Right cardiac atrium (tissue), 5 donors: ENCODE measurements at regions of chr6 and their contacts with region 1.

Region 1: GRCh38 chr6:32933636-32934085 is 7.2 kb downstream of the HLA-DMB start:
- DNase-seq: peak; percentile 79 to 92 (median 87)
- ATAC-seq: peak; percentile 62 to 79
- H3K4me3 ChIP-seq: no peak overlapping the region
- H3K27ac ChIP-seq: no peak overlapping the region
- H3K4me1 ChIP-seq: no peaks in the 10 kb centered on the region
- H3K27me3 ChIP-seq: no peaks in the 10 kb centered on the region

Region 2: DNA sequence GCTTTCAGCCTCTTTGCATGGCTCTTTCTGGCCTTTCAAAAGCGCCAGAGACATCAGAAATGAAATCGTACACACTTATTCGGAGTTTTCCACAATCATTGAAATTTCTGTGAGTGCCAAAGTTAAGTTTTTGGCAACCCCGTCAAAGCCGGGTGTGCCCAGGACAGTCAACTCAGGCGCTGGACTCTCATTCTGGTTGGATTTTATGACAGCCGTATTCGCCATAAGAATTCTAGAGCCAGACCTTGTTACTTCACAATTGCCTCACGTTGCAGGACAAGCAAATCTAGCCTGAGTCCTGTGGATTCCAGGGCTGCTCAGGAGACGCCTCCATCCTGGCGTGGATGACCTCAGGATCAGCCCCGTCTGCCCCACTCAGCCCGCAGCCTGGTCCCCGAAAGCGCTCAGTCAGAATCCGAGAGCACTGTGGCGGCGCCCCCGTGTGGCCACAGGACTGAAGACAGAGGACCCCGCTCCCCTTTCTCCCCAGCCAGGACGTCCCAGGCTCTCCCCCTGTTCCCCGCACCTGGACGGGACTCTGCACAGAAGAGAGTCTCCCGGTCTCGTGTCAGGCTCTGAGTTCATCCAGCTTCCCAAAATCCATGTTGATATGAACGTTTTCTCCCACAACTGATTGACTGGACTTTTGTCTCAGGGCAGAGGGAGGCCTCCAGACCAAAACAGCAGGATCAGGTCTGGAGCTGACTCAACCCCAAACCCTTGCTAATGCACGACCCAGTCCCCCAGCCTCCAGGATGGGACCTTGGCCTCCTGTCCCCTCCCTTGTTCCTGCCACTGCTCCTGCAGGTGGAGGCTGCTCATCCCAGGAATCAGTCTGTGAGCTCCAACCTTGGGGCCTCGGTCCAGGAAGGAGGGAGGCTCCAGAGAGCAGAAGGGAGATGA is 1492.0 kb before region 1 on chr6:
- intact Hi-C with region 1: no loop called
- DNase-seq: peak; percentile 83 to 95 (median 93)
- ATAC-seq: peak; percentile 96 to 98
- H3K4me3 ChIP-seq: no peak overlapping the region
- H3K27ac ChIP-seq: no peak overlapping the region
- H3K4me1 ChIP-seq: no peaks in the 10 kb centered on the region
- H3K27me3 ChIP-seq: no peaks in the 10 kb centered on the region

Region 3: DNA sequence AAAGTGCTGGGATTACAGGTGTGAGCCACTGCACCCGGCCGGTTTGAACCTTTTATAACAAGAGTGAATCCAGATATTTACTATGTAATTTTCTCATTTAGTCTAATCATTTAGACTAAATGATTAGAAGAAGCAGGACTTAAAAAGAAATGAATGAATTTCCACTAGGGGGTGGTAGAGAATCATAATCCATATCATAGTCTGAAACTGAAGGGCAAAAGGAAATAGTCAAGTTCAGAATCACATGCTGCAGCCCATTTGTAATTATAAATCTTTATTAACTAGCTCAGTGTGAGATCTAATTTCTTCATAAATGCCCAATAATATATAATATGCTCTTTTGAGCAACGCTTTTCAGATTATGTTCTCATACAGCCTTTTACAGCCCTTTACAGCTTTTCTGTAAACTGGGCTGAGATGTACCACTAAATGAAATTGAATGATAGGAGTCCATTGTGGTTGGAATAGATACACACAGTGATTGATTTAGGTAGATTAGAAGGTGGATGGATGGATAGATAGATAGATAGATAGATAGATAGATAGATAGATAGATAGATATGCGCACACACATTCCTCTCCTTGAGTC is 47.9 kb before region 1 on chr6:
- intact Hi-C with region 1: loop called in 3 of 4 experiments (anchors 5 kb)
- DNase-seq: no peak
- ATAC-seq: peak in 1 of 2 donors; percentile 40
- H3K4me3 ChIP-seq: no peak overlapping the region
- H3K27ac ChIP-seq: no peak overlapping the region
- H3K4me1 ChIP-seq: no peaks in the 10 kb centered on the region
- H3K27me3 ChIP-seq: no peaks in the 10 kb centered on the region

Region 4: GRCh38 chr6:32971581-32972352 is 38.1 kb after region 1 on chr6:
- intact Hi-C with region 1: loop called in 1 of 4 experiments (anchors 5 kb)
- DNase-seq: peak; percentile 99 to 100 (median 99)
- ATAC-seq: peak; percentile 69
- H3K4me3 ChIP-seq: peak overlapping the region; percentile 90
- H3K27ac ChIP-seq: peak overlapping the region; percentile 98
- H3K4me1 ChIP-seq: no peaks in the 10 kb centered on the region
- H3K27me3 ChIP-seq: no peaks in the 10 kb centered on the region

Region 5: DNA sequence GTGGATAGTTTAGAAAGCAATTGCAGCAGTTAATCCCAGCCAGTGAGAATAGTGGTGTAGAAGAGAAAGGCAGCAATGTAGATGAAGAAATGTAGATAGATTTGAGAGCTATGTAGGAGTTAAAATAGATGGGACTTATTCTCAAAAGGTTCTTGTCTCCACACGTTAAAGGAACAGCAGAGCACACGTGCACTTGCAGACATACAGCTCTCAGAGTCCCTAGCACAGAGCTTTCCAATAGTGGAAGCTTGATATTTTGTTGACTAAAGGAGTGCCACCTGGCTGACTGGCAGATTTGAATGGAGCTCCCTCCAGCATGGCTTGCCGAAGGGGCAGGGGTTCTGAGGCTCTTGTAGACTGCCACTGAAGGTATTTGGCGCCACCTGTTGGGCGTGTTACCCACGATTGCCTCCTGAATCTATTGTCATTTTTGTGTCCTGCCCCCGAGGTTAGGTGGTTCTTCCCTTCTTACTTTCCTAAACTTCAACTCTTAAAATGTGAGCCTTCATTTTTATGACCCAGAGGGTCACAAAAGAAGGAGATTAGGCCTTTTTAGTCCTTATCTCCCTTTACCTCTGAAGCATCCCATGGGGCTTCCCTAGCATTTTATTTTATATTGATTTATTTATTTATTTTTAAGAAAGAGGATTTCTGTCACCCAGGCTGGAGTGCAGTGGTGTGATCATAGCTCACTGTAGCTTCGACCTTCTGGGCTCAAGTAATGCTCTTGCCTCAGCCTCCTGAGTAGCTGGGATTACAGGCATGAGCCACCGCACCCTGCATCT is 51.1 kb after region 1 on chr6:
- intact Hi-C with region 1: loop called (anchors 2 to 5 kb)
- DNase-seq: peak; percentile 90 to 97 (median 92)
- ATAC-seq: peak; percentile 82
- H3K4me3 ChIP-seq: no peak overlapping the region
- H3K27ac ChIP-seq: no peak overlapping the region
- H3K4me1 ChIP-seq: no peaks in the 10 kb centered on the region
- H3K27me3 ChIP-seq: no peaks in the 10 kb centered on the region